GM18951 (cell line): ENCODE measurements at regions of chr14 and their contacts with region 1.

Region 1: GRCh38 chr14:73524493-73524892 is 12.4 kb upstream of the ACOT1 start:
- POLR2A ChIP-seq: no peak

Region 2: GRCh38 chr14:73564889-73565288 is 40.4 kb after region 1 on chr14:
- in situ Hi-C with region 1: loop called (anchors 5 kb)
- POLR2A ChIP-seq: no peak

Region 3: GRCh38 chr14:74155287-74155686 is 630.8 kb after region 1 on chr14:
- in situ Hi-C with region 1: no loop called
- POLR2A ChIP-seq: no peak

Region 4: DNA sequence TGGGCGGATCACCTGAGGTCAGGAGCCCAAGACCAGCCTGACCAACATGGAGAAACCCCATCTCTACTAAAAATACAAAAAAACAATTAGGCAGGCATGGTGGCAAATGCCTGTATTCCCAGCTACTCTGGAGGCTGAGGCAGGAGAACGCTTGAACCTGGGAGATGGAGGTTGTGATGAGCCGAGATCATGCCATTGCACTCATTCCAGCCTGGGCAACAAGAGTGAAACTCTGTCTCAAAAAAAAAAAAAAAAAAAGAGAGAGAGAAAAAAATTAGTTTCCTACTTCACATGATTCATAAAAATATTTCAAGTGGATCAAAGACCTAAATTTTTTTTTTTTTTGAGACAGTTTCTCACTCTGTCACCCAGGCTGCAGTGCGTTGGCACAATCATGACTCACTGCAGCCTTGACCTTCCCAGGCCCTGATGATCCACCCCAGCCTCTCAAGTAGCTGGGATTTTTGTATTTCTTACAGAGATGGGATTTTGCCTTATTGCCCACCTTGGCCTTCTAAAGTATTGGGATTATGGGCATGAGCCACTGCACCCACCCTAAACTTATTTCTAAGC is 1213.3 kb after region 1 on chr14:
- in situ Hi-C with region 1: no loop called
- POLR2A ChIP-seq: no peak